ENCODE measurements at regions of chr2 and their contacts with region 1.

Region 1: DNA sequence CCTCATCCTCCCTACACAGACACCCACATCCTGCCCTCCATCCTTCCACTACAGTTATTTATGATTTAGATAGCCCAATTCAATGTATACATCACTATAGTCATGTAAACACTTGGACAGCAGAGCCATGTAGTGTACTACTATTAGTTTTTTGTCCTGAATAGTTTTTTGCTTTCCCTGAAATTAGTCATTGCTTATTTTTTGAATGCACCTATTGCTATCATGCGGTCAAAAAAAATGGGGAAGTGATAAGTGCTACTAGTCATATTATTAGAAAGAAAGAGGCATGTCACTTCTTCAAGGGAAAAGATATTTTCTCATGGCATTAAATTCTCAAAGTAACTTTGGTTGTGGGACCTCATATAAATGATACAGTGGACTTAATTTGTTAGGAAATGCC is 6.8 kb upstream of the GREB1 start:
- DNase-seq: no peak
- H3K4me3 ChIP-seq: no peak overlapping the region
- H3K27ac ChIP-seq: no peak overlapping the region
- H3K4me1 ChIP-seq: no peaks in the 10 kb centered on the region
- H3K27me3 ChIP-seq: no peaks in the 10 kb centered on the region
- CTCF ChIP-seq: no peak

Region 2: DNA sequence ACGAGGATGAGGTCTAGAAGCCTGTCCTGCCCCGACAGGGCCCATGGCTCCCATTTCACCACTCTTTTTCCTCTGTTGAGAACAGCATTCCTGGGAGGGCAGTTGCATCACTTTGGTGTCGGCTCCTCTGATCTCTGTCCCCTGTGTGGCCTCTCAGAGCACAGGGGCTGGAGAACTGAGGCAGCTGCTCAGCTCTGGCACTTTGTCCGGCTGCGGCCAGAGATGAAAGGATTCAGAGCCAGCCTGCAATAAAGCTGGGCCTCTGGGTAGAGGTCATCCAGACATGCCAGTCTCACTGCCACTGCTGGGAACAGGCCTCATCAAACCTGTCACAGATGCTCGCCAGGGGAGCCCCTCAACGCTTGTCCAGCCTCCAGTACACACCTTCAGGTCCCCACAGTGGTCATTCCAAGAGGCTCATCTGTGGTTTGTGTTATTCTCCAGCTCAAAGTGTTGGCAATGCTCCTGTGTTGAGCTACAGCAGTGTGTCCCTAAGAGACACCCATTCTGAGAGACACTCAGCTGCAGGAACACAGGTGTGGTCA is 169.5 kb before region 1 on chr2:
- CTCF ChIA-PET with region 1: no interaction called
- POLR2A ChIA-PET with region 1: no interaction called
- intact Hi-C with region 1: no loop called
- DNase-seq: no peak
- H3K4me3 ChIP-seq: no peak overlapping the region
- H3K27ac ChIP-seq: no peak overlapping the region
- H3K4me1 ChIP-seq: no peaks in the 10 kb centered on the region
- H3K27me3 ChIP-seq: no peaks in the 10 kb centered on the region
- CTCF ChIP-seq: no peak

Region 3: DNA sequence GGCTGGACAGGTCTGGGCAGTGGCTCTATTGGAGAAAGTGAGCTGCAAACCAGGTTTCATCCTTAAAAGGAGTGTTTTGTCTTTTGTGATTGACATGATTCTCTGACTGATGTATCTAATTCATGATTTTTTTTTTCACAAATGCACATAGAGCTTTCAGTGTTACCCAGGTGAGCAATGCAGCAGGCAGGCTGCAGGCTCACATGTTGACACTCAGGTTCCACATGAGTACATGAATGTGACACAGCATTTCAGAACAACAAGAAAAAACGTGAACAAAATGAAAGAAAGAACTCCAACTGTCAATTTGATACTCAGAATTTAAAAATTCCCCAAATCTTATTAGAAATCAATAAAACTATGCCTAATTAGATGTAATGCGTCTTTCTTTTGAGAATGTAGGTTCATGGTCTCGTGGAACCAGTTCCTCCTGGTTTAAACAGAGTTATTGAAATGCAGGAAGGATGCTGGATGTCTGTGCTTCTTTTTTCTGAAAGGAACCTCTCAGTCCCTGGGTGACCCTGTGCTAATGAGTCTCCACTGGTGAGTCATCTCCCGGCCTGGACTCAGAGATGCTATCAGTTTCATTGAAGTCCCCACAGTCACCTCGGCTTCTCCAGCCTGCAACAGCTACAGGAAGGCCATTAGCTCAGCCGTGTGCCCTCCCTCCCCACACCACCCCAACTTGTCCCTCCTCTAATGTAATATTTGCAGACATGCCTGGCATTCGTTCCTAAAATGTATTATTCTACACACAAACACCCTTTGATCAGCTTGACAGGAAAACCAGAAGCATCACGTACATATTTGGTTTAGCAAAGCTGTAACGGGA is 649.8 kb after region 1 on chr2:
- CTCF ChIA-PET with region 1: no interaction called
- POLR2A ChIA-PET with region 1: interaction called, 15 read pairs
- intact Hi-C with region 1: no loop called
- DNase-seq: no peak
- H3K4me3 ChIP-seq: no peak overlapping the region
- H3K27ac ChIP-seq: no peak overlapping the region
- H3K4me1 ChIP-seq: no peaks in the 10 kb centered on the region
- H3K27me3 ChIP-seq: no peaks in the 10 kb centered on the region
- CTCF ChIP-seq: no peak

Measured in A673 (cell line).